ENCODE measurements at regions of chr13 and their contacts with region 1.

Region 1: GRCh38 chr13:24220086-24220703 is 59.7 kb downstream of the SPATA13 start:
- DNase-seq: peak in 1 of 2 donors; percentile 69
- H3K4me3 ChIP-seq: no peak overlapping the region
- CTCF ChIP-seq: peak in 1 of 3 donors; percentile 52
- POLR2A ChIP-seq: no peak

Region 2: GRCh38 chr13:24020375-24020830 is 199.8 kb before region 1 on chr13:
- intact Hi-C with region 1: loop called (anchors 5 kb)
- DNase-seq: peak in 1 of 2 donors; percentile 45
- H3K4me3 ChIP-seq: no peak overlapping the region
- CTCF ChIP-seq: no peak
- POLR2A ChIP-seq: no peak

Region 3: GRCh38 chr13:24053519-24054251 is 166.5 kb before region 1 on chr13:
- intact Hi-C with region 1: loop called (anchors 10 kb)
- DNase-seq: no peak
- H3K4me3 ChIP-seq: no peak overlapping the region
- CTCF ChIP-seq: peak in 1 of 3 donors; percentile 26
- POLR2A ChIP-seq: no peak

Measured in lower leg skin (tissue), 4 donors.